ENCODE measurements at regions of chr4 and their contacts with region 1.

Region 1: GRCh38 chr4:113878668-113879067 is 100.8 kb downstream of the ARSJ start:
- DNase-seq: peak; percentile 40
- H3K4me3 ChIP-seq: no peak overlapping the region
- H3K27ac ChIP-seq: no peak overlapping the region
- H3K4me1 ChIP-seq: peaks cover 16% of the 10 kb centered on the region
- H3K27me3 ChIP-seq: no peaks in the 10 kb centered on the region
- CTCF ChIP-seq: peak; percentile 25 to 30
- POLR2A ChIP-seq: no peak

Region 2: DNA sequence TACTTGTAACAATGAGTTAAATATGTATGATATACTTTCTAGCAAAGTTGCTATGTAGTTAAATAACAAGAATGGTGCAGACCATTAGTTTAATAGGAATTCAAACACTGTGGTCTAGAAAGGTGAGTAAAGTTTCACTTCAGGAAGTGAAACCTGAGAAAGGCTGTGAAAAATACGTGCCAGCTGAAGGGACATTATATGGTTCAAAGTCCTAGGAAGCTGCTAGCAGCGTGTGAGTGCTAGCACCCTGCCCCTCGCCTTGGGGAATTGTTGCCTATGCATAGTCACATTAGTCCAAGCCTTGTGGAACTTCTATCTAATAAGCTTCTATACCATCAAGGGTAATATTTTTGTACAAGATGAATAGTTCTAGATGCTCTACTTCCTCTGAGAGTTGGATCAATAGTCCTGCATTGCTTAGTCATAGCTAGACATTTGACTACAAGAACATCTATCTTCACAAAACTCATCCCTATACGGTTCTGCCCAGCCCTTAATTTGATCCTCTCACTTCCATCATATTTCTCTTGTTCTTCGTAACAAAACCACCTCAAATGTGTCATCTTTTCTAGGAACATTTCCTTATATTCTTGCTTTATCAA is 146.6 kb after region 1 on chr4:
- CTCF ChIA-PET with region 1: no interaction called
- POLR2A ChIA-PET with region 1: no interaction called
- dilution Hi-C with region 1: no loop called
- intact Hi-C with region 1: no loop called
- DNase-seq: no peak
- H3K4me3 ChIP-seq: no peak overlapping the region
- H3K27ac ChIP-seq: no peak overlapping the region
- H3K4me1 ChIP-seq: peaks cover 8% of the 10 kb centered on the region
- H3K27me3 ChIP-seq: no peaks in the 10 kb centered on the region
- CTCF ChIP-seq: no peak
- POLR2A ChIP-seq: no peak

Region 3: DNA sequence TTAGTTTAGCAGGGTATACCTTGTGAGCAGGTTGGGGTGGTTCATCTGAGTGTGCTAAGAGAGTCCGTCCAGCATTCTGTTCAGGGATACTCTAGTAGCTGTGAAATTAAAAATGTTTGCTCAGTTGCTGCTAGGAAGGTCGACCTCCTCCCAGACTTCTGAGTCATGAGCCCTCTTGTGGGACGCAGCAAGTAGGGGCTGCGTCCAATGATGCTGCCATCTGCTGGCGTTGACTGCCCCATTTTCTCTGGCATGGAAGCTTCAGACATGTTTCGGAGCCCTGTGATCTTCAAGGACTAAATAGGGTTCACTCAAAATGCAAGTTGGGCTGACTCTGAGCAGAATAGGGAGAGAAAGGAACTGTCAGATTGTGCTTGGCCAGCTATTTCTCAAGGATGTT is 301.8 kb after region 1 on chr4:
- CTCF ChIA-PET with region 1: no interaction called
- POLR2A ChIA-PET with region 1: no interaction called
- dilution Hi-C with region 1: no loop called
- intact Hi-C with region 1: loop called (anchors 1 kb)
- DNase-seq: peak; percentile 87
- H3K4me3 ChIP-seq: no peak overlapping the region
- H3K27ac ChIP-seq: no peak overlapping the region
- H3K4me1 ChIP-seq: no peaks in the 10 kb centered on the region
- H3K27me3 ChIP-seq: no peaks in the 10 kb centered on the region
- CTCF ChIP-seq: peak; percentile 69 to 79
- POLR2A ChIP-seq: no peak

Measured in endothelial cell of umbilical vein (primary cell).